ENCODE measurements at regions of chr13 and their contacts with region 1.

Region 1: DNA sequence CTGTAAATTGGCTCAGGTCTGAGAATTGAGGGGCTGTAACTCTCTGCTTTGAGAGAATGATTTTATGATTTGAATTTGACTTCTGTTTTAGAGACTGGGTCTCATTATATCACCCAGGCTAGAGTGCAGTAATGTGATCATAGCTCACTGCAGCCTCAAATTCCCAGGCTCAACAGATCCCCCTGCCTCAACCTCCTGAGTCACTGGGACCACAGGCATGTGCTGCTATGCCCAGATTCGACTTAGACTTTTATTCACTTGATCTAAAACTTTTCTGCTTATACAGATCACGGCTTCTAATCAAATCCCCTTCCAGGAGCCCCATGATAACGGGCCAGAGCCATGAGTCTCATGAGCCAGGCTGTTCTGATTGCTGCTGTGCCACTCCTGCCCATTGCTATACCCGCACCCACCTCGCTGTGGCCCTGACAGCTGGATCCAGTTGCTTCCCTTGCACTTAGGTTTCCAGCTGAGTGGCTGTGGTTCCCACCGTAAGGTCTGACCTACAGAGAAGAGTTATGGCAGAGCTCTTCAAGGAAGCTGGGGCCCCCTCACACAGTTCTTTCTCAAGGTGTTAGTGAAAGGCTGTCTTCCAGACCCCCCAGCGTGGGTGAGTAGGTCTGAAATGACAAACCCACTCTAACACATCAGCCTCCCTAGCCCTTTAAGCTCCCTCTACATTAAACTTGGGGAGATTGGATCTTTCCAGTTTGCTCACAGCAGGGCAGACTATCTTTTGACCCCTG is 251.2 kb upstream of the SGCG start:
- DNase-seq: no peak

Region 2: DNA sequence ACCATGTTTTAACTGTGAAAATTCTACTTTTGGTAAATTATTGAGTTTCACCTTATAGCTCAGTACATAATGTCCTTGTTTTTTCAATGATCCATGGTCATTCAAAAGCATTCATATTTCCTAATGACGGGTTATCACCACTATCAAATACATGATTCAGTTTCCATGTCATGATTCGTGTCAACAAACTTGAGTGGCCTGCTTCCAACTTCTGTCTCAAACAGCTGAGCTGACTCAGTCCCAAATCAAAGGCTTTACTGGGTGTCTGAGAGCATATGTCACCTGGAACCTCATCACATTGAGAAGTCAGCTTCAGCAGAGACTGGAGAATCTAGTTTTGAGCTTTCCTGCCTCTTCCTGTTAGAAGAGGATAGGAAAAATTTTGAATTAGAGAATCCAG is 210.9 kb after region 1 on chr13:
- intact Hi-C with region 1: no loop called
- DNase-seq: no peak

Region 3: DNA sequence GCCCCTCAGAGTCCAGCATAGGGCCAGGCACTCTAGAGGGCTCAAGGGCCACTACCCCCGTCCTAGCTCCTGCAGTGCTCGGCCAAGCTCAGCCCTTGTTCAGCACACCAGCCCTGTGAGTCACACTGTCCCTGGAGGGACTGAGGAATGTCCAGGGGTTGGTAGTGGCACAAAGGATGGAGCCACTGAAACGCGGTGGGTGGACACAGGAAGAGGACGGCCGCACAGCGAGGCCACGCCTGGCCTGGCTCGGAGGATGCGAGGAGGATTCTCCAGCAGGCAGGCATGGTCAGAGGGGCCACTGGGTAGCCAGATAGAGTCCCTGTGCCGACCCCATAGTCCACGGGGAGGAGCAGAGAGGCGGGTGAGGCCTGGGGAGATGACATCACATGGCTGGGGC is 1425.5 kb after region 1 on chr13:
- intact Hi-C with region 1: loop called (anchors 10 kb)
- DNase-seq: no peak